ENCODE measurements at regions of chr3 and their contacts with region 1.

Region 1: GRCh38 chr3:153768561-153769469 is 352.4 kb upstream of the ARHGEF26 start:
- DNase-seq: peak; percentile 52
- CTCF ChIP-seq: peak; percentile 79

Region 2: DNA sequence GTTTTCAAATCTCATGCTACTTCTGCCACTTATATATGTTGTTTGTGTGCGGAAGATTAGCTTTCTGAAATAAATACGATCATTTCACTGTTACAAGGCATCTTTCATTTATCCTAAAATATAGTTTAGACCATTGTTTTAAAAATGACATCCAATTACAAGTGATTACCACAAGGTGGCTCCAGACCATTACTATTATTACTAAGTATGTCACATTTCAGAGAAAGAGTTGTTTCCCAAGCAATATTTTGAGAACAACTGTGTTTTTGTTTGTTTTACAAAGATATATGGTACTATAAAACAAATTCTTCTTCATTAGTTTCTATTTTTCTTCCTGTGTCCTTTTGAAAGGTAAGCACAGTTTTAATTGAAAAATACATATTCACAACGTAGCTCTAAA is 742.8 kb before region 1 on chr3:
- CTCF ChIA-PET with region 1: interaction called, 16 read pairs
- POLR2A ChIA-PET with region 1: no interaction called
- DNase-seq: no peak
- CTCF ChIP-seq: peak; percentile 51

Region 3: DNA sequence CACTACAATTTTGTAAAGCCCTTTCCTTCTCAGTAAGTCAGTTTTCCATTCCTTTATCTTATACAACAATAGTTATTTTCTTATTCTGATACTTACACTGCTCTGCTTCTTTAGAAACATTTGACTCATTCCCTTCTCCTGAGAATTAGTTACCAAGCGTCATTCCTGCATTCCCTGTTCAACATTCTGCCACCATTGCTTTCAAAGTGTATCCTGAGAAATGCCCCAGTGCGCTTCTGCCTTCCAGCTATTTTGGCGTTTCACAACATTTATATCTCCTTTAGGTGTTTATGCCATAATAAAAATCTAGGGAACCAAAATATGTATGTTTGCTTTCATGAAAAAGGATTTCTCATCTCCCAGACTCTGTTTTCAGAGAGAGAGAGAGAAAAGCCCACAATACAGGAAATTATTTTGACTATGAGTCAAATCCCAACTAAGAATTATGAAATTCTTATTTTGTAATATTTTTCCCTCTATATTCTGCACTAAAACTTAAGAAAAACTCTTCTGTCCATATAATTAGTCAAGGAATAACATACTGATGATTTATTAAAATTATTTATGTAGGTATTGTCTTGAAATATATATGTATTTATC is 725.0 kb before region 1 on chr3:
- CTCF ChIA-PET with region 1: interaction called, 10 read pairs
- POLR2A ChIA-PET with region 1: no interaction called
- DNase-seq: no peak
- CTCF ChIP-seq: no peak

Region 4: DNA sequence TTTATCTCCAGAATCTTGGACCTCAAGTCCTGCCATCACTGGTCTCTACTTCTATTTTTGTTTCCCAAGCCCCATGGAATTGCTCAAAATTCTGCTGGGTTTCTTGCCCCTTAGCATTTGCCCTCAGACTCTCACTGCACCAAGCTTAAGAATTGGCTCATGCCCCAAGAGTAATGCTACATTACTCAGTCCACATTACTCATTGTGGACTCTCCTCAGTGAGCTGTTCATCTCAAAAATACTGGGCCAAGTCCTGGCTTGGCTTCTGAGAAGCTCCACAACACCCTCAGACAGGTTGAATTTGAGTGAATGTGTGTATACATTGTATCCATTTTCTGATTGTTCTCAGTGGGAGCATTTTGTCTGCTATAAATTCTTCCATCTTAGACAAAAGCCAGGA is 12.0 kb before region 1 on chr3:
- CTCF ChIA-PET with region 1: interaction called, 14 read pairs
- POLR2A ChIA-PET with region 1: no interaction called
- DNase-seq: no peak
- CTCF ChIP-seq: no peak

Region 5: GRCh38 chr3:153783106-153783505 is 14.3 kb after region 1 on chr3:
- CTCF ChIA-PET with region 1: interaction called, 37 read pairs
- POLR2A ChIA-PET with region 1: no interaction called
- DNase-seq: no peak
- CTCF ChIP-seq: no peak

Measured in GM10248 (cell line).